Activated CD4-positive, alpha-beta memory T cell treated with anti-CD3 and anti-CD28 coated beads for 36 hours (primary cell): ENCODE measurements at regions of chr10 and their contacts with region 1.

Region 1: DNA sequence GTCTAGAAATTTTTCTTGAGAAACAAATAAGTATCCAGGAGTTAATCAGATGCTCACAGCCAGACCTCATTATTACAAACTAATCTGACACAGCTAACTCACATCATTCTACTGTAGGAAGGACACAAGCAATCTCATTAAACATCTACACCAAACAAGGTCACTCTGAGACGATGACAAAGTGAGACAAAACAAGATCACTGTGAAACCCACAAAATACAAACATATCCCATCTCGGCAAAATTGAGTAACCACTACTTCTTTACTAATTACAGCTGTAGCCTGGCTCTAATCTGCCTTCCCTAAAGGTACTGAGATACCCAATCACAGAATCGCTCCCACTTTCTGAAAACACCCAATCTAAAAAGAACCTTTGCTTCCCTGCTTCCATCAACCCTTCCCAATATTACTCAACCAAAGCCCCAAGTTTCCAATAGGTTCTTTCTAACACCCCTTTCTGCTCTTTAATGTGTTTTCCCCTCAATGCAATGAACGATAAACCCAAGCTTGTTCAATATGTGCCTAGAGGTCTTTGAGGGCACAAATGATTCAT is 26.9 kb downstream of the CCDC6 start:
- DNase-seq: no peak
- H3K4me3 Mint-ChIP-seq: peak overlapping the region; percentile 45
- H3K27ac Mint-ChIP-seq: peak overlapping the region; percentile 90
- H3K4me1 Mint-ChIP-seq: peaks cover 85% of the 10 kb centered on the region
- H3K27me3 Mint-ChIP-seq: no peaks in the 10 kb centered on the region

Region 2: DNA sequence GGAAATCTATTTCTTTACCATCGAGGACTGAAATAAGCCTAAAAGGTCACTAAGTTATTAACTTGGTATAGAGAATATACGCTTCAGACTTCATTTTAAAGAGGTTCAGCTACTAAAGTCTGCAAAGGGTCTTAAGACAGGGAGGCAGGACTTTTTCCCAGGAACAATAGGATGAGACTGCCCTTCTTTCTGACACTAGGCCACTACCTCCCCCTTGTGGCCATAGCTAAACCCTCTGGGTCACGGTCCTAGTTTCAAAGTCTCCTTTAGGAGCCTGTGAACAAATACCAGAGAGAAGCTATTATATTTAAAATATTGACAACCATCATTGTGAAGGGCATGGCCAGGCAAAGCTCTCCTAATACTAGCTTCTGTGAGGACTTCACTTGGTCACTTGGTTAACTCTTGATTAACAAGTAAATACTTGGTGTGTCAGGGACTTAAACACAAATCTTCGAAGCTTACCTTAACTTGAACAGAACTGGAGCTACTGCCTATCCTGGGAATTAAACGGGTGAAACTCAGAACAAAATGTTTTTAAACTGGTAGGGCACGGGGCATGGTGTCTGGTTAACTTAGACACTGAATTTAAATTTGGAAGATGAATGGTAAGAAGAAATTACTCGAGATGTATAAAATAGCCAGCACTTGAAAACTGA is 48.7 kb before region 1 on chr10:
- CTCF ChIA-PET with region 1: no interaction called
- POLR2A ChIA-PET with region 1: no interaction called
- intact Hi-C with region 1: loop called (anchors 5 kb)
- DNase-seq: peak; percentile 32
- H3K4me3 Mint-ChIP-seq: no peak overlapping the region
- H3K27ac Mint-ChIP-seq: no peak overlapping the region
- H3K4me1 Mint-ChIP-seq: peaks cover 52% of the 10 kb centered on the region
- H3K27me3 Mint-ChIP-seq: no peaks in the 10 kb centered on the region

Region 3: DNA sequence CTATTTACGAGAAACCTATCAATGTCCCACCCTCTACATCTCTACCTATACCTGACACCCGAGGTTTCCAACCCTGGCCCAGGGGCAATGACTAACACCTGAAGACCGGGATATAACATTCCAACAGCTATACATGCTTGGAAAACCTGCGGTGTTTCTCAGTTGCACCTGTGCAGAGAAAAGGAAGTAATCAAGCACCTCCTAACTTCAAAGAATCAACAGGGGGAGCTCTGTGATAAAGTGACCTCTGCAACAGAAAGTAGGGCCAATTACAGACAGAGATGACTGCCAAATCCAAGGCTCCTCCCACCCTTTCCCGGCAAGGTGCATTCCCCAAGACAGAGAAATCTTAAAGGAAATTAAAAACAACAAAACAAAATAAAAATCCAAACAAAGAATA is 14.3 kb before region 1 on chr10:
- CTCF ChIA-PET with region 1: interaction called, 8 read pairs
- POLR2A ChIA-PET with region 1: no interaction called
- intact Hi-C with region 1: loop called (anchors 1 kb)
- DNase-seq: no peak
- H3K4me3 Mint-ChIP-seq: peak overlapping the region; percentile 13
- H3K27ac Mint-ChIP-seq: peak overlapping the region; percentile 34
- H3K4me1 Mint-ChIP-seq: peaks cover 55% of the 10 kb centered on the region
- H3K27me3 Mint-ChIP-seq: no peaks in the 10 kb centered on the region

Region 4: DNA sequence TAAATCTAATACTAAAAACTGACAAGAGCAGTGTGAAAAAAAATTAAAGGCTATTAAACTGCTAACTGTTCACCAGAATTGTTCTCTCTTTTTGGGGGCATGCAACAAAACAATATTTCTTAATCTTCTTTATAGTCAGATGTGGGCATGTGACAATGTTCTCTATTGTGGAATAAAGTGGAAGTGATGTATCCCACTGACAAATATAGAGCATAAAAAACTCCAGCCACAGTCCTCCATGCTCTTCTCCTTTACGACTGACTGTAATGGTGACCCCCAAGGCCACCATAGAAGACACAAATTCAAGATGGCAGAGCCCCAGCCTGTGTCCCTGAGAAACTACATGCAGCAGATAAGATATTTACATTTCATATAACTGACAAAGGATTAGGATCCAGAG is 38.5 kb after region 1 on chr10:
- CTCF ChIA-PET with region 1: no interaction called
- POLR2A ChIA-PET with region 1: no interaction called
- intact Hi-C with region 1: no loop called
- DNase-seq: no peak
- H3K4me3 Mint-ChIP-seq: no peak overlapping the region
- H3K27ac Mint-ChIP-seq: no peak overlapping the region
- H3K4me1 Mint-ChIP-seq: no peaks in the 10 kb centered on the region
- H3K27me3 Mint-ChIP-seq: peaks cover 18% of the 10 kb centered on the region

Region 5: GRCh38 chr10:60572511-60573194 is 693.2 kb after region 1 on chr10:
- CTCF ChIA-PET with region 1: no interaction called
- POLR2A ChIA-PET with region 1: no interaction called
- intact Hi-C with region 1: loop called (anchors 1 kb)
- DNase-seq: peak; percentile 51
- H3K4me3 Mint-ChIP-seq: peak overlapping the region; percentile 83
- H3K27ac Mint-ChIP-seq: peak overlapping the region; percentile 87
- H3K4me1 Mint-ChIP-seq: peaks cover 54% of the 10 kb centered on the region
- H3K27me3 Mint-ChIP-seq: no peaks in the 10 kb centered on the region